ENCODE measurements at regions of chr6 and their contacts with region 1.

Region 1: GRCh38 chr6:24991810-24992467 is 56.2 kb upstream of the RIPOR2 start:
- DNase-seq: peak; percentile 89
- H3K4me3 Mint-ChIP-seq: peak overlapping the region; percentile 12
- H3K27ac Mint-ChIP-seq: peak overlapping the region; percentile 74
- H3K4me1 Mint-ChIP-seq: peaks cover 52% of the 10 kb centered on the region
- H3K27me3 Mint-ChIP-seq: no peaks in the 10 kb centered on the region

Region 2: GRCh38 chr6:24855395-24856245 is 136.3 kb before region 1 on chr6:
- CTCF ChIA-PET with region 1: interaction called, 48 read pairs
- POLR2A ChIA-PET with region 1: no interaction called
- DNase-seq: peak; percentile 81
- H3K4me3 Mint-ChIP-seq: no peak overlapping the region
- H3K27ac Mint-ChIP-seq: peak overlapping the region; percentile 88
- H3K4me1 Mint-ChIP-seq: peaks cover 59% of the 10 kb centered on the region
- H3K27me3 Mint-ChIP-seq: no peaks in the 10 kb centered on the region

Region 3: DNA sequence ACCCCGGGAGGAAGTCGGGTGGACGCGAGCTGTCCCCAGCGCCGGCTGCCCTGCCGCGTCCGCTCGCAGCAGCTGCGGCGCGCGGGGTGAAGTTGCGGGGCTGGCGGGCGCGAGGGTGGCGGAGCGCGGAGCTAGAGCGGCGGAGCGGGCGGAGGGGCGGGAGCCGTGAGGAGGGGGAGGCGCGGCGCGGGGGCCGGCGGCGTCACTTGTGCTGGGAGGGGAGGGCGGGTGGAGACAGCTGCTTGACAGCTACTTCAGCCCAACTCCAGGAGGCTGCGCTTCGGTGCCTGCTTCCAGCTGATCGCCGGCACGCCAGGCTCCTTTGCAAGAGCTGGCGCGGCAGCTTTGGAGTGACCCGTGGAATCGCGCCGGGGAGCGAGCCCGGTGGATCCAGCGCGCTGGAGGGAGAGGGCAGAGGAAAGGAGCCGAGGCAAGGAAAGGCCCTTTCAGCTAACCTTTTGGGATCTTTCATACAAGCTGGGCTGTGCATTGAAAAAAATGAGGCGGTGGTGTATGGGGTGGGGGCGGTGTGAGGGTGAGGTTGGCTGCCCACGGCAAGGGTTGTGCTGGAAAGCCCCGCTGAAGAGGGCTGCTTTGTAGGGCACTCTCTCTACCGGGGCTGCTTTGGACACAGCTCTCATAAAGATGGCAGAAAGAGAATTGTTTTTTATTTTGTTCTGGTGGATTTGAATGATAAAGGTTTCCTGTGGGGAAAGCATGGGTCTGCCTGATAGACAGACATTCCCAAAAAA is 80.8 kb before region 1 on chr6:
- CTCF ChIA-PET with region 1: interaction called, 11 read pairs
- POLR2A ChIA-PET with region 1: interaction called, 3 read pairs
- DNase-seq: no peak
- H3K4me3 Mint-ChIP-seq: peak overlapping the region; percentile 85
- H3K27ac Mint-ChIP-seq: peak overlapping the region; percentile 90
- H3K4me1 Mint-ChIP-seq: peaks cover 94% of the 10 kb centered on the region
- H3K27me3 Mint-ChIP-seq: no peaks in the 10 kb centered on the region

Region 4: DNA sequence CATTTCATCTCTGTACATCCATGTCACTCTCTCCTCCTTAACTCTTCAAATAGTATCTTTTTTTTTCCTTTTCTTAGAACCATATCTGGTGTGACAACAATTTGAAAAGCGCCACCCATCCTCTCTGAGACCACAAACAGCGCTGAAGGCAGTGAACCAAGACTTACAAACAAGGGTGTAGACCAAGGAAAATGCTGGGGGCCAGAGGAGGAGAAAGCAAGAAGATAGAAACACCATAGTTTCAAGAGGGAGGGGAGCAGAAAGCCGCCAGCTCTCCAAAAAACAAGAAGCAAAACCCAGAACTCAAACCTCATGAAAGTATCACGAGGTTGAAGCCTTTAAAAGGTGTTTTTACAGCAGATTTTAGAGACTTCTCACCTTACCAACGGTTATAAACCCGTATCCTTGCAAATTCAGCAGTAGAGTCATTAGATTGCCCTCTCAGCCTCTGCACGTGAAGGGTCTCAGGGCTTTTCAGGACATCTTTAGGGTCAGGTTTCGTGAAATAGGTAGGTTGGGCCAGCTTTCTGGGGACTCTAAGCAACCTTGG is 42.8 kb before region 1 on chr6:
- CTCF ChIA-PET with region 1: interaction called, 13 read pairs
- POLR2A ChIA-PET with region 1: interaction called, 3 read pairs
- DNase-seq: peak; percentile 90
- H3K4me3 Mint-ChIP-seq: peak overlapping the region; percentile 40
- H3K27ac Mint-ChIP-seq: peak overlapping the region; percentile 96
- H3K4me1 Mint-ChIP-seq: peaks cover 76% of the 10 kb centered on the region
- H3K27me3 Mint-ChIP-seq: no peaks in the 10 kb centered on the region

Region 5: GRCh38 chr6:24974182-24975171 is 17.5 kb before region 1 on chr6:
- CTCF ChIA-PET with region 1: interaction called, 22 read pairs
- POLR2A ChIA-PET with region 1: no interaction called
- DNase-seq: no peak
- H3K4me3 Mint-ChIP-seq: no peak overlapping the region
- H3K27ac Mint-ChIP-seq: peak overlapping the region; percentile 84
- H3K4me1 Mint-ChIP-seq: peaks cover 36% of the 10 kb centered on the region
- H3K27me3 Mint-ChIP-seq: no peaks in the 10 kb centered on the region

Region 6: DNA sequence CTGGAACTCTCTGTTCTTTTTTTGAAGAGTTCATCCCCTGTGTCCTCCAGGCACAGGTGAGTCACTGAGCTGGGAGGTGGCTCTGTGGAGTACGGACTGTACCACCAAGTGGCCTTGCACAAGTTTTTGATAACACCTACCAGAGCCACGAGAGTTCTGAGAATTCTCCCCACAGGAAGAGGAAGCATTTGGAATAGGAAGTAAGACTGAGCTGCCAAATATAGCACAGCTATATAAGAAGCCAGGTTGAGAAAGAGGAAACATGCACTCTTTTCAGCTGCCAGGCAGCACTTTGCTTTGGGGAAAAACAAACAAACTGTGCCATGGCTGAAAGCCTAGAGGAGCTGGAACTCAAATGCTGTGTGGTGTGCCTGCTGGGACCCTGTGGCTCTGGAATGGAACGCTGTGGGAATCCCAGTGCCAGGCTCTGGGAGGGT is 14.6 kb after region 1 on chr6:
- CTCF ChIA-PET with region 1: interaction called, 24 read pairs
- POLR2A ChIA-PET with region 1: interaction called, 3 read pairs
- DNase-seq: peak; percentile 66
- H3K4me3 Mint-ChIP-seq: peak overlapping the region; percentile 2
- H3K27ac Mint-ChIP-seq: peak overlapping the region; percentile 94
- H3K4me1 Mint-ChIP-seq: peaks cover 82% of the 10 kb centered on the region
- H3K27me3 Mint-ChIP-seq: no peaks in the 10 kb centered on the region

Region 7: DNA sequence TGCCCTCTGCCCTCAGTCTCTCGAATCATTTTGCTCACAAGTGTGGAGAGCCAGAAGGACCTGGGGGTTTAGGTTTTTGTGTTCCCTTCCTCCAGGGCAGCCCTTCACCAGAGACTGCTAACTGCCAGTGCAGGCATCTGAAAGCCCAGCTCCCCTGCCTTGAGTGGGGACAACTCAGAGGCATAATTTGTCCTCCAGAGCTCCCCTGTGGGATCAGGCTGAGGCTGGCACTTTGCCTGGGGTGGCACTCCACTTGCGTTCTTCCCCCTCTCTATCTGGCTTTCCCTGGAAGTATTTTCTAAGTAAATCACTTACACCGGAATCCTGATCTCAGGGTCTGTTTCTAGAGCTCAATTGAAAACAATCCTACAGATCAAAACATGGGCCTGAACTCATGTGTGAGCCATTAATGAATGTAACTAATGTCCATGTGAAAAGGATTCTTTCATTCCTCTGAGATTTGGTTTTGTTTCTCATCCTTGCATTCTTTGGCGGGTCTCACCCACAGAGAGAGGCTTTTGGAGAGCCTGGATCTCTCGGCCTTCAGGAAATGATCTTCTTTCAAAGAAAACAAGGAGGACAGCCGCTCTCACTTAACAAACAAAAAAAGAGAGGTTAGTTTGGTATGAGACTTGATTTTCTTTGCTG is 69.5 kb after region 1 on chr6:
- CTCF ChIA-PET with region 1: interaction called, 10 read pairs
- POLR2A ChIA-PET with region 1: no interaction called
- DNase-seq: no peak
- H3K4me3 Mint-ChIP-seq: no peak overlapping the region
- H3K27ac Mint-ChIP-seq: no peak overlapping the region
- H3K4me1 Mint-ChIP-seq: peaks cover 22% of the 10 kb centered on the region
- H3K27me3 Mint-ChIP-seq: peaks cover 2% of the 10 kb centered on the region

Region 8: DNA sequence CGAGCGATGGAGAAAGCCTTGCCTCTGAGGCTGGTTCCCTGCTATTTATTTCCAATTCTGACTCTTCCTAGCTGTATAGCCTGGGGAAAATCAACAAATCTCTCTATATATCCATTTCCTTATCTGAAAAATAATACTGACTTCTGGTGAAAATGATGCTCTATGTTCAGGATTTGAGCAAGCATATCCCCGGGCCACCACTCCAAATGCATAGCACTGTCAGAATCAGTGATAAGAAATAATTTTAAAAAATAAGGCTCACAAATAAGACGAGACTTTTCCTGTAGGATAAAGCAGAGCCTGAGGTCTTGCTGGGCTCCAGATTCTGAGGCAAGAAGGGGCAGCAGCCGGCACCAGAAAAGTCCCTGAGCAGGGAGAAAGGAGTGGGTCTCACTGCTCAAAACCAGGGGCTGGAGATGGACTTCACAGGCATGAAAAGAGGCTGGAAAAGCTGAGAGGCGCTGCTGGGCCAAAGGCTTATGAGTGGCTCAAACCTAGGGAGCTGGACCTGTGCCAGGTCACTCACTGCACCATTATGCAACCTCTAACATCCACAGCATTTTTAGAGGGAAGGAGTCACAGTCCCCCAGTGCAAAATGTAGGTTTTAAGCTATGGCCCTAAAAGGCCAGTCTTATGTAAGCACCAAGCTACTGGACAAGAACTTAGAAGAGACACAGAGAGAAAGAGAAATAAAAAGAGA is 714.5 kb after region 1 on chr6:
- CTCF ChIA-PET with region 1: no interaction called
- POLR2A ChIA-PET with region 1: no interaction called
- DNase-seq: no peak
- H3K4me3 Mint-ChIP-seq: no peak overlapping the region
- H3K27ac Mint-ChIP-seq: no peak overlapping the region
- H3K4me1 Mint-ChIP-seq: no peaks in the 10 kb centered on the region
- H3K27me3 Mint-ChIP-seq: peaks cover 21% of the 10 kb centered on the region